HEK293 (cell line): ENCODE measurements at regions of chr11 and their contacts with region 1.

Region 1: GRCh38 chr11:64854534-64855429 is 10.3 kb upstream of the CDC42BPG start:
- H3K4me3 ChIP-seq: no peak overlapping the region
- H3K27ac ChIP-seq: no peak overlapping the region
- H3K4me1 ChIP-seq: no peaks in the 10 kb centered on the region
- CTCF ChIP-seq: no peak

Region 2: GRCh38 chr11:64638018-64638665 is 216.6 kb before region 1 on chr11:
- CTCF ChIA-PET with region 1: no interaction called
- POLR2A ChIA-PET with region 1: no interaction called
- H3K4me3 ChIP-seq: no peak overlapping the region
- H3K27ac ChIP-seq: no peak overlapping the region
- H3K4me1 ChIP-seq: no peaks in the 10 kb centered on the region
- CTCF ChIP-seq: no peak

Region 3: DNA sequence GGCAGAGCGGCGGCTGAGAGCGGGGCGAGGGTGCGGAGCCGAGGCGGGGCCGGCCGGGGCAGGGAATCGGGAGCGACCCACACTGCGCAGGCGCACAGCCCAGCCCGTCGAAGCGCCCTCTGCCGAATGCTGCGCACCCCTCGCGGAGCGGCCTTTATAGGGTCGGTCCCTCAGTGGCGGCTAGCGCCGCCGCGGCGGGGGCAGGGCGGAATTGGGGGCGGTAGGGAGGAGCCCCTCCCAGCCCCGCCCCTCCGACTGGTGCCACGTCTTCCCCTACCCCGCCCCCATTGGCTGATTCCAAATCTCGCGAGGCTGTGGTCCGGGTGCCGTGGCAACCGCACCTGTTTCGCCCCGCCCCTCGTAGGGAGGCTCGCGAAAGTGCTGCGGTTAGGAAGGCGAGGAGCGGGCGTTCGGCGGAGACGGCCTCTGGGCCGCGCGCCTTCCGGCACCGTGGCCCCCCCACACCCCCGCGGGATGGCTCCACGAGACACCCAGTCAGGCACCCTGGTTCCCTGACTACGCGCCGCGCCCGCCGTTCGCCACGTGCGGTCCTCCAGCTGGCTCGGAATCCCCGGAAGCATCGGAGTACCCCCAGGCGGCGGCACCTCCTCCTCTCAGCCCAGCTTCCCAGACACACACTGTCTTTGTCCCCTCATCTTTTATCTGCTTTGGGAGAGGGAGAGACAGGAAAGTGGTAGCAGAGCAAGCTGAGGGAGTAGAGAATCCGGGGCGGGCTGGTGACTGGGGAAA is 23.9 kb after region 1 on chr11 and contains the start of gene EHD1:
- CTCF ChIA-PET with region 1: interaction called, 20 read pairs
- POLR2A ChIA-PET with region 1: interaction called, 23 read pairs
- H3K4me3 ChIP-seq: peak within 1 kb of the TSS; percentile 85
- H3K27ac ChIP-seq: peak within 1 kb of the TSS; percentile 64; the same call in 1 of the 2 replicates
- H3K4me1 ChIP-seq: no peaks in the 10 kb centered on the region
- CTCF ChIP-seq: peak; percentile 89

Region 4: DNA sequence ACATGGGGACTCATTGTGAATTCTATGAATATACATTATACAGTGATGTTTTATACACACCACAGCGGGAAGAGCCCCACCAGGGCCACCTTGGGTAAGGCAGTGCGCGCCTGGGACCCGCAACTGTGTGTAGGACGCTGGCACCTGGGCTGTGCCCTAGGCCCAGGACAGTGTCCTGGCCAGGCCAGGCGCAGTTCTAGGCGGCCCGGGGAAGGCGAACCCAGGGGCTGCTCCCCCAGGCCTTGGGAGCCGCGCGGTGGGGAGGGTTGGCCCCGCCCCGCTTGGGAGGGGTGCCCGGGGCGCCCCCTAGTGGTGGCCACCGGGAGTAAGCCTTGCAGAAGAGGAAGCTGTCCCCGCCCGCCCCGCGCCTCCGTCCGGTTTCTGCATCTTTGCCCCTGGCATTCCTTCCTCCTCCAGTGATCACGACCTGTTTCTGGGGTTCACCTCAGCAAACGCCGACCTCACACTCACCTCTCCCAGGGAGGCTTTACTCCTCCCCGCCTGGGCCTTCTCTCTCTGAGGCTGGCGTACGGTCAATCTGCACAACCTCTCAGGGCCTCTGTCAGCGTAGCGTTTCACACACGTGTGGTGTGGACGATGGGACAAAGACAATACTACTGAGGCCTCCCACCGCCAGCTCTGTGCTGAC is 33.1 kb after region 1 on chr11:
- CTCF ChIA-PET with region 1: interaction called, 111 read pairs
- POLR2A ChIA-PET with region 1: interaction called, 3 read pairs
- H3K4me3 ChIP-seq: no peak overlapping the region
- H3K27ac ChIP-seq: no peak overlapping the region
- H3K4me1 ChIP-seq: no peaks in the 10 kb centered on the region
- CTCF ChIP-seq: peak; percentile 84

Region 5: DNA sequence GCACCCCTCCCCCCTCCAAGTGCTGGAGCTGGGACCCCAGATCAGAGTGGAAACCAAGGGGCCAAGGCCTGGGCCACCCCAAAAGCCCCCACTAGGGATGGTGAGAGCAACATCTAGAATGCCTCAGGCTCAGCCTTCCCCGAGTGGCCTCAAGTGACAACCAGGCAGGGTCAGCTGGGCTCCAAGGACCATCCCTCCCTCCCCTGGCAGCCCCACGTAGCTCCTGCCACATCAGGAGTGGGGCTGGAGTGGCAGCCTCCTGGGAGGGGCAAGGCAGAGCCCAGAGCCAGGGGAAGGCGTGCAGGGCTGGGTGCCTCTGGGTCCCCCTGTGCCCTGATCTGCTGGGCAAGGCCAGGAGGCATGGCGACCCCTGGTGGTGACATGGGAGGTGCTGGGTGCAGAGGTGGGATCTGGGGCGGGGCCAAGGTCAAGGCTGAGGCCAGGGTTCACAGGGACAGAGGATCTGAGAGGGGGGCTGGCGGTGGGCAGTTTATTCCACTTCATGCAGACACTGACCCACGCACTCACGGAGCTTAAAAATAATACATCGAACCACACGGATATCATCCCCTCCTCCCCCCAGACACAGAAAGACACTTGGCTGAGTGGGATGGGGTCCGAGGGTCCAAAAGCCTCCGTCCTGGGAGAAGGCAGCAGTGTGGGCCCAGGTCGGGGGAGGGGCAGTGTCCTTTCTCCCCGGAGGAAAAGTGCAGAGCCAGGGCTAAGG is 39.5 kb after region 1 on chr11:
- CTCF ChIA-PET with region 1: interaction called, 111 read pairs
- POLR2A ChIA-PET with region 1: interaction called, 3 read pairs
- H3K4me3 ChIP-seq: no peak overlapping the region
- H3K27ac ChIP-seq: no peak overlapping the region
- H3K4me1 ChIP-seq: no peaks in the 10 kb centered on the region
- CTCF ChIP-seq: peak; percentile 77